ENCODE measurements at regions of chr2 and their contacts with region 1.

Region 1: GRCh38 chr2:191051825-191052778 is 38.1 kb upstream of the STAT1 start:
- DNase-seq: no peak
- ATAC-seq: peak; percentile 61 to 69 (median 65)
- H3K4me3 ChIP-seq: no peak overlapping the region
- H3K27ac ChIP-seq: no peak overlapping the region
- H3K4me1 ChIP-seq: peaks cover 0 to 28% (median 9%) of the 10 kb centered on the region in 4 donors
- H3K27me3 ChIP-seq: no peaks in the 10 kb centered on the region
- CTCF ChIP-seq: peak; percentile 63 to 86 (median 68)
- POLR2A ChIP-seq: no peak

Region 2: DNA sequence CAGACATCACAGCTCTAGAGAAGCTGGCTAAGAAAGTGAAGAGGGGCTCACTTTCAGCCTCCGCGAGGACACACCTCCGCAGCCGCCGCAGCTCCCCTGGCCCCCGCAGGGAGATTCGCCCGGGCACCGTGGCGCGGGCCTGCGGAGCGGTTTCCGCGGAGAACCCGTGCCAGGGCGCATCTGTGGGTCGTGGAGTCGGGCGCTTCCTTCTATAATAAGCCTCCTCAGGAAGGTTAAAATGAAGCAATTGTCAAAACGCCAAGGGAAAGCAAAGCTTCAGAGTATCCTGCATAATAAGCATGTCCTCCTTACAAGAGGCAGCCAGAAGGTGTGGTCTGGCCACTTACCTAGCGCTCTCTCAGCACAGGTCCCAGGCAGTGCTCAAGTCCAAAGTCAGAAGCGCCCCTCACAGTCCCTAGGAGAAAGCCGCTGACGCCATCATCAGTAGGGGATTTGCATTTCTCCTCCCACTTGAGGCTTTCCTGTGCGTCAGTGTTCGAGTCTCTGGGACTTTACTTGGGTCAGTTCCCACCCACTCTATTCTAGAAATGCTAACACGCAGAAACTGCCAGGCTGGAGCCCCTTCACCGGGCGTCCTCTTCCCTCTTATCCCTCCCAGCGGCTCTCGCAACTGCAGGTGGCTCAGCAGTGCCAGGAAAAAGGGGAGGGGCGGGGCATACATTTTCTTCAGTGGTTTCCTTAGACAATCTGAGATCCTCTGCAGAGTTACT is 98.7 kb after region 1 on chr2 and contains the start of gene STAT4:
- intact Hi-C with region 1: loop called in 1 of 2 experiments (anchors 10 kb)
- DNase-seq: peak in 2 of 3 donors; percentile 48 to 63
- ATAC-seq: peak; percentile 76 to 83 (median 80)
- H3K4me3 ChIP-seq: peak within 1 kb of the TSS; percentile 45 to 61 (median 58)
- H3K27ac ChIP-seq: peak within 1 kb of the TSS; percentile 5 to 45 (median 41)
- H3K4me1 ChIP-seq: peaks cover 0 to 7% (median 0%) of the 10 kb centered on the region in 4 donors
- H3K27me3 ChIP-seq: no peaks in the 10 kb centered on the region
- CTCF ChIP-seq: no peak
- POLR2A ChIP-seq: peak; percentile 65
- total RNA-seq, gene STAT4: 0.90 to 6.1 (median 3.2) TPM

Region 3: GRCh38 chr2:191521608-191522208 is 469.6 kb after region 1 on chr2:
- intact Hi-C with region 1: loop called in 1 of 2 experiments (anchors 5 kb)
- DNase-seq: no peak
- ATAC-seq: peak; percentile 59 to 75 (median 66)
- H3K4me3 ChIP-seq: no peak overlapping the region
- H3K27ac ChIP-seq: no peak overlapping the region
- H3K4me1 ChIP-seq: no peaks in the 10 kb centered on the region
- H3K27me3 ChIP-seq: no peaks in the 10 kb centered on the region
- CTCF ChIP-seq: peak; percentile 71 to 79 (median 76)
- POLR2A ChIP-seq: no peak